Endothelial cell of umbilical vein (primary cell): ENCODE measurements at regions of chr14 and their contacts with region 1.

Region 1: GRCh38 chr14:34059855-34060638 is 109.2 kb upstream of the EGLN3 start:
- DNase-seq: peak; percentile 67
- H3K4me3 ChIP-seq: peak overlapping the region; percentile 40 to 64 (median 53)
- H3K27ac ChIP-seq: peak overlapping the region; percentile 31
- H3K4me1 ChIP-seq: no peaks in the 10 kb centered on the region
- H3K27me3 ChIP-seq: peaks cover 0 to 7% of the 10 kb centered on the region in 2 experiments
- CTCF ChIP-seq: peak; percentile 15 to 44
- POLR2A ChIP-seq: peak; percentile 39

Region 2: GRCh38 chr14:32939254-32940065 is 1120.6 kb before region 1 on chr14:
- CTCF ChIA-PET with region 1: no interaction called
- POLR2A ChIA-PET with region 1: no interaction called
- dilution Hi-C with region 1: no loop called
- intact Hi-C with region 1: loop called (anchors 10 kb)
- DNase-seq: peak; percentile 68
- H3K4me3 ChIP-seq: peak overlapping the region; percentile 20 to 56 (median 56)
- H3K27ac ChIP-seq: peak overlapping the region; percentile 44
- H3K4me1 ChIP-seq: peaks cover 8% of the 10 kb centered on the region
- H3K27me3 ChIP-seq: peaks cover 31 to 46% of the 10 kb centered on the region in 2 experiments
- CTCF ChIP-seq: no peak
- POLR2A ChIP-seq: no peak

Region 3: DNA sequence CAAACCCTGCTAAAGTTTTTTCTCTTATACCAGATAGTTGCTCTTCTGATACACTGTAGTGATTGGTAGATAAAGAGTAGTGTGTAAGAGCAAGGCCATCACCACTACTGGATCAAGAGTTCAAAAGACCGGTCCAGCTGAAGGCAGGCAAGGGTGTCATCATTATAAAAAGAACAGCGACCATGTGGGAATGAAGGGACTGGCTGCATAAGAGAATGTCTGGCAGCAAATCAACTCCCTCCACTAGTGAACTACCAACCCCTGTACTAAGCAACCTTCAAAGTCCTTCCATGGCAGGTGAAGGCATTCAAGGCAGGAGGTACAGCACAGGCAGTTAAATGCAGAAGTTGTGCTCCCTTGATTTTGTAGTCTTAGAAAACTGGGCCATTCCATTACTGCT is 162.7 kb before region 1 on chr14:
- CTCF ChIA-PET with region 1: no interaction called
- POLR2A ChIA-PET with region 1: no interaction called
- dilution Hi-C with region 1: no loop called
- intact Hi-C with region 1: no loop called
- DNase-seq: no peak
- H3K4me3 ChIP-seq: no peak overlapping the region
- H3K27ac ChIP-seq: no peak overlapping the region
- H3K4me1 ChIP-seq: no peaks in the 10 kb centered on the region
- H3K27me3 ChIP-seq: peaks cover 0 to 2% of the 10 kb centered on the region in 2 experiments
- CTCF ChIP-seq: no peak
- POLR2A ChIP-seq: no peak

Region 4: GRCh38 chr14:33914676-33915516 is 145.2 kb before region 1 on chr14:
- CTCF ChIA-PET with region 1: no interaction called
- POLR2A ChIA-PET with region 1: no interaction called
- dilution Hi-C with region 1: no loop called
- intact Hi-C with region 1: loop called (anchors 5 kb)
- DNase-seq: peak; percentile 86
- H3K4me3 ChIP-seq: no peak overlapping the region
- H3K27ac ChIP-seq: no peak overlapping the region
- H3K4me1 ChIP-seq: peaks cover 27% of the 10 kb centered on the region
- H3K27me3 ChIP-seq: no peaks in the 10 kb centered on the region
- CTCF ChIP-seq: no peak
- POLR2A ChIP-seq: no peak

Region 5: GRCh38 chr14:34247605-34248004 is 187.6 kb after region 1 on chr14:
- CTCF ChIA-PET with region 1: no interaction called
- POLR2A ChIA-PET with region 1: no interaction called
- dilution Hi-C with region 1: no loop called
- intact Hi-C with region 1: no loop called
- DNase-seq: no peak
- H3K4me3 ChIP-seq: no peak overlapping the region
- H3K27ac ChIP-seq: no peak overlapping the region
- H3K4me1 ChIP-seq: peaks cover 2% of the 10 kb centered on the region
- H3K27me3 ChIP-seq: peaks cover 0 to 2% of the 10 kb centered on the region in 2 experiments
- CTCF ChIP-seq: no peak
- POLR2A ChIP-seq: no peak

Region 6: DNA sequence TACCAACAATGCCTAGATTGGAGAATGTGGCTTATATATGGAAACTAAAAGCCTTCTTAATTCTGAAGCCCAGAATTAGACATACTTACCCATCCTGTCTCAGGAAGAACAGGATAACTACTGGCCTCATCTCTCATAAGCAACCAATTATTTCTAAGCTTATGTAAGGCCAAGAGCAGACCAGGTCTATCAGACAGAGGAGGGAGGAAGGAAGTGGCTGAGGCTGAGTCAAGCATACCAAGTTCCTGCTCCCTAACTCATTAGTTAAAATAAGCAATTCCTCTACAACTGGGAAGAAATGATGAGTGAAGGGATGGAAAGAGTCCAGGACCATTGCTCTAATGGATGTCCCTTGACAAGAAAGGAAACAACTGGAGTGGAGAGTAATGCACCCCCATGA is 1446.9 kb after region 1 on chr14:
- CTCF ChIA-PET with region 1: no interaction called
- POLR2A ChIA-PET with region 1: no interaction called
- dilution Hi-C with region 1: no loop called
- intact Hi-C with region 1: no loop called
- DNase-seq: peak; percentile 67
- H3K4me3 ChIP-seq: no peak overlapping the region
- H3K27ac ChIP-seq: peak overlapping the region; percentile 86
- H3K4me1 ChIP-seq: peaks cover 16% of the 10 kb centered on the region
- H3K27me3 ChIP-seq: no peaks in the 10 kb centered on the region
- CTCF ChIP-seq: no peak
- POLR2A ChIP-seq: no peak